H1 (cell line): ENCODE measurements at regions of chr6 and their contacts with region 1.

Region 1: GRCh38 chr6:44064089-44064947 is 62.9 kb downstream of the MRPL14 start:
- DNase-seq: no peak
- H3K4me3 ChIP-seq: no peak overlapping the region
- H3K27ac ChIP-seq: no peak overlapping the region
- H3K4me1 ChIP-seq: peaks cover 0 to 16% (median 9%) of the 10 kb centered on the region in 4 experiments; a peak in 5 of 7 replicates
- H3K27me3 ChIP-seq: no peaks in the 10 kb centered on the region; a peak in 1 of 7 replicates
- CTCF ChIP-seq: no peak
- EP300 ChIP-seq: no peak
- POLR2A ChIP-seq: no peak
- RAD21 ChIP-seq: no peak

Region 2: DNA sequence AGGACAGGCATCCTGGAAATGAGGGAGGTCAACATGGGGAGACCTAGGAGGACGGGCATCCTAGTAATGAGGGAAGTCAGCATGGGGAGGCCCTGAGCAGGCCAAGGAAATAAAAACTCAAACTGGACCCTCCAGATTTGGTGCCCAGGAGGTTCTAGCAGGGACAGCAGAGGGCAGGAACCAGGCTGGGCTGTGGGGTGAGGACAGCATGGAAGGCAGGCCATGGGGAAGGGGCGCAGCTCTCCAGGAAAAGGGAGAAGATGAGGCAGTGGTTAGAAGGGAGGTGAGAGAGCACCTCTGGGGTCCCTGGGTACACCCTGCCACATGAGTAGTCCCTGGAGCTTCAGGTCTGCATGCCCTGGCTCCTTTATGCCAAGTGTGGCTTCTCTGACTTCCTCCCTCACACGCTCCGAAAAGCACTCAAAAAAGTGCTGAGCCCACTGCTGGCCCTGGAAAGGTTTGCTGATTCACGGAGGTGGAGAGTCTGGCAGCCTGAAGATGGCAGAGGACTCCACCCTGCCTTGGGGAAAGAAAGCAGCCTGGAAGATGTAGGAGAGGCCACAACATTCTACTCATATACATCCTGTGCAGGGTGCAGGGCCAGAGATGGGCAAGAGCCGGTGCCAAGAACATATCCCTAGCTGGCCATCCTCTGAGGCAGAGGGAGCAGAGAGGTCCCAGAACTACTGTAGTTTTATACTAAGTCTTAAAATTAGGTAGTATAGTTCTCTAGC is 92.0 kb before region 1 on chr6:
- CTCF ChIA-PET with region 1: interaction called, 11 read pairs
- POLR2A ChIA-PET with region 1: no interaction called
- DNase-seq: no peak
- H3K4me3 ChIP-seq: no peak overlapping the region
- H3K27ac ChIP-seq: no peak overlapping the region
- H3K4me1 ChIP-seq: peaks cover 0 to 8% (median under 1%) of the 10 kb centered on the region in 4 experiments; a peak in 3 of 7 replicates
- H3K27me3 ChIP-seq: no peaks in the 10 kb centered on the region
- CTCF ChIP-seq: no peak
- EP300 ChIP-seq: no peak
- POLR2A ChIP-seq: no peak
- RAD21 ChIP-seq: no peak

Region 3: DNA sequence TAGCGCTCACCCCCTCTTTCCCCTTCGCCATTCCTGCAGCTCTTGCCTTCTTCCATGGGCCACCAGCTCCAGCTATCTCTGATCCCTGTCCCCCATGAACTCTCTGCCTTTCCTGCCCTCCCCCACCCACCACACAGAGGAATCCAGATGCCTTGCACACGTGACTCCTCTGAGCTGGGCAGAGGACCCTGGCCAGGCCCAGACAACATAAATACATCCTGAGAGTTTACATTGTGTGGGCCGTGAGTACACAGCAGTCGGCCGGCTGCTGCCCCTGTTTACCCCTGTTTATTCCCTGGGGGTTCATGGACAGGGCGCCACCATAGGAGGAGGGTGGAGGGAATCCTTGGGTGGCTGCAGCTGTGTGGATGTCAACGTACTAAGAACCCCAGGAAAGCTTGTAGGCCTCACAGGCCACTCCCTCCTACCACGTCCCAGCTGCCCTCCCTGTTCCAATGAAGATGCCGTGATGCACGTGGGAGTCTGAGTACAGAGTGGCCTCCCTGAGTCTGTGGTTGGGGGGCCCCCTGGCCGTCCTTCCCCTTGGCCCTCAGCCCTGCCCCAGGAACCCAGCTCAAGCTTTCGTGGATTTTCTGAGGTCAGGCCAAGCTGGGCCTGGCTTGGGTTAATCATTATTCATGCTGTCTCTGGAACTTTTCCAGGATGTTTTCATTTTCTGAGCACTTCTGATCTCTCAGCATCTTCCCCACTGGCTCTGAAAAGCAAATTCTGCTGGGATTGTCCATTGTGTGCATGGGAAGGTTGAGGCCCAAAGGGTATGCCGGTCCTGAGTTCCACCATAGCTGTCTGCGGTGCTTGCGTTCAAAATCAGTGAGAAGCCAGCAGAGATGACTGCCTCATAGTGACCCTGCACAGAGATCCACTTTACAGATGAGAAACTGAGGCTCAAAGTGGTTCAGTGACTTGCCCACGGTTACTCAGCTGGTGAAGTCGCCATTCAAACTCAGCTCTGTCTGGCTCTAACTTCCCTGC is 73.4 kb before region 1 on chr6:
- CTCF ChIA-PET with region 1: interaction called, 331 read pairs
- POLR2A ChIA-PET with region 1: no interaction called
- DNase-seq: no peak
- H3K4me3 ChIP-seq: no peak overlapping the region
- H3K27ac ChIP-seq: no peak overlapping the region
- H3K4me1 ChIP-seq: peaks cover 0 to 16% (median 8%) of the 10 kb centered on the region in 4 experiments; a peak in 6 of 7 replicates
- H3K27me3 ChIP-seq: no peaks in the 10 kb centered on the region
- CTCF ChIP-seq: no peak
- EP300 ChIP-seq: no peak
- POLR2A ChIP-seq: no peak
- RAD21 ChIP-seq: no peak

Region 4: DNA sequence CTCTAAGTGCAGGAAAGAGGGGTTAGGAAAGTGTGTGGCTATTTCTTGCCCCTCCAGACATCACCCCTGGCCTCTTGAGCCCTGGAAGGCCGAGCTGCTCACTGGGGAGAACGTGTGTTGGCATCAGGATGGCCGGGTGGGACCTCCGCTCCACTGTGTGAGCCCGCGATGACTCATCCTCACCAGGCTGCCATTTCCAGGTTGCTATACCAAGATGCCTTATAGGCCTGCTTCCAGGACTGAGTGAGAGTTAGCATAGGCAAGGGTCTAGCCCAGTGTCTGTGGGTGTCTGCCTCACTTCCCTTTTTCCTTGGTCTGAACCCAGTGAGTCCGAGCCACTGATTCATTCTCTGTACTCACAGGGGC is 42.0 kb before region 1 on chr6:
- CTCF ChIA-PET with region 1: interaction called, 331 read pairs
- POLR2A ChIA-PET with region 1: interaction called, 3 read pairs
- DNase-seq: no peak
- H3K4me3 ChIP-seq: no peak overlapping the region
- H3K27ac ChIP-seq: no peak overlapping the region
- H3K4me1 ChIP-seq: peaks cover 0 to 4% (median 0%) of the 10 kb centered on the region in 4 experiments; a peak in 1 of 7 replicates
- H3K27me3 ChIP-seq: no peaks in the 10 kb centered on the region
- CTCF ChIP-seq: no peak
- EP300 ChIP-seq: no peak
- POLR2A ChIP-seq: no peak
- RAD21 ChIP-seq: no peak

Region 5: GRCh38 chr6:44041461-44042260 is 22.7 kb before region 1 on chr6:
- CTCF ChIA-PET with region 1: interaction called, 112 read pairs
- POLR2A ChIA-PET with region 1: interaction called, 6 read pairs
- DNase-seq: peak in 1 of 2 experiments; percentile 68
- H3K4me3 ChIP-seq: no peak overlapping the region
- H3K27ac ChIP-seq: 0 out of 2 replicates have a peak overlapping the region, but pooled peaks have one; percentile 21
- H3K4me1 ChIP-seq: peaks cover 9 to 27% (median 15%) of the 10 kb centered on the region in 4 experiments
- H3K27me3 ChIP-seq: no peaks in the 10 kb centered on the region
- CTCF ChIP-seq: no peak
- EP300 ChIP-seq: no peak
- POLR2A ChIP-seq: no peak
- RAD21 ChIP-seq: no peak

Region 6: GRCh38 chr6:44052419-44053023 is 11.8 kb before region 1 on chr6:
- CTCF ChIA-PET with region 1: interaction called, 112 read pairs
- POLR2A ChIA-PET with region 1: interaction called, 16 read pairs
- DNase-seq: no peak
- H3K4me3 ChIP-seq: no peak overlapping the region
- H3K27ac ChIP-seq: no peak overlapping the region
- H3K4me1 ChIP-seq: peaks cover 0 to 14% (median 4%) of the 10 kb centered on the region in 4 experiments; a peak in 6 of 7 replicates
- H3K27me3 ChIP-seq: no peaks in the 10 kb centered on the region
- CTCF ChIP-seq: no peak
- EP300 ChIP-seq: no peak
- POLR2A ChIP-seq: no peak
- RAD21 ChIP-seq: no peak

Region 7: DNA sequence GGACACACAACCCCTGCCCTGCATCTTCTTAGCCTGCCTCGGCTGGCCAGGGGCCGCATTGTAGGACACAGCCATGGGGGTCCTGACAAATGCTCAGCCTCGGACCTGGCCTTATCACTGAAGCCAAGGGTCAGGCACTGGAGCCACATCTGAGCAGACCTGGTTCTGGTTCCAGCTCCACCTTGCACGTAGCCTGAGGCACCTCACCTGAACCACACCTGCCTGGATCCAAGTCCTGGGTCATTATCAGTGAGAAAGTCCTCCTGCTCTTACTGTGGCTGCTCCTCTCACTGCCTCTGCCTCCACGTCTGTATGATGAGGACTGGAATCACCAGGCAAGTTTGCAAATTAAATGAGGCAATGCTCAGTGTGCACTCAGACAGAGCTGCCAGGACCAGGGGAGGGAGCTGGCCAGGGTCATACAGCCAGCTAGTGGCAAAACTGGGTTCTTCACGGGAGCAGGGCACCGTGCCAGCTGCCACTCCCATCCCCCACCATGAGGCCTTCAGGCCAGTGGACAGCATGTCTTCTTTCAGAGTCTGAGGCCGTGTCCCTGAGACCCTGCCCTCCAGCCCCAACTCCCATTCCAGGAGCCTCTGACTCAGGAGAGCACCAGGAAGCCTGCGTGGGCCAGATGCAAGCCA is 22.7 kb after region 1 on chr6:
- CTCF ChIA-PET with region 1: interaction called, 19 read pairs
- POLR2A ChIA-PET with region 1: interaction called, 3 read pairs
- DNase-seq: no peak
- H3K4me3 ChIP-seq: no peak overlapping the region
- H3K27ac ChIP-seq: no peak overlapping the region
- H3K4me1 ChIP-seq: peaks cover 0 to 6% (median 3%) of the 10 kb centered on the region in 4 experiments; a peak in 6 of 7 replicates
- H3K27me3 ChIP-seq: no peaks in the 10 kb centered on the region
- CTCF ChIP-seq: no peak
- EP300 ChIP-seq: no peak
- POLR2A ChIP-seq: no peak
- RAD21 ChIP-seq: no peak